ENCODE measurements at regions of chr5 and their contacts with region 1.

Region 1: GRCh38 chr5:13987843-13988464 is 43.5 kb upstream of the DNAH5 start:
- DNase-seq: peak; percentile 17 to 25
- H3K4me3 ChIP-seq: no peak overlapping the region
- H3K27ac ChIP-seq: no peak overlapping the region
- H3K4me1 ChIP-seq: no peaks in the 10 kb centered on the region
- H3K27me3 ChIP-seq: no peaks in the 10 kb centered on the region
- CTCF ChIP-seq: peak; percentile 68 to 76 (median 72)
- POLR2A ChIP-seq: no peak

Region 2: DNA sequence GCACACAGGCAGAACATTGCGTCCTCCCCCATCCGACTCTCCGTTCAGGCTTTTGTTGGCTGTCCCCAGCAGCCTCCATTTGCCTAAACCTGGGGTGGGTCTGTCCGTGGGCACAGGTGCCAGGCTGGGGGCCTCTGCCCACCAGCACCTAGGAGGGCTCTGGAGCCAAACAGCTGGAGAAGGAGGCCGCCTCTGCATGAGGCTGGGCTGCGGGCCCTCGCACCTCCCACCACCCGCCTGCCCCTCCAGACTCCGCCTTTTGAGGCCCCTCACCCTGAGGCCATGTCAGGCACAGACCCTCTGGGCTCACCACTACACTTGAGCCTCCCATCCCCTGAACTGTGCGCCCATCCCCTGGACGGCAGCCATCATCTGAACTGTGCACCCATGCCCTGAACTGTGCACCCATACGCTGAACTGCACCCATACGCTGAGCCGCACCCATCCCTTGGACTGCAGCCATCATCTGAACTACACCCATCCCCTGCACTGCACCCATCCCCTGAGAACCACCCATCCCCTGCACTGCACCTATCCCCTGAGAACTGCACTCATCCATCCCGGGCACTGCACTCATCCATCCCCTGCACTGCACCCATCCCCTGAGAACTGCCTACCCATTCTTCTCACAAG is 495.7 kb after region 1 on chr5:
- intact Hi-C with region 1: no loop called
- DNase-seq: no peak
- H3K4me3 ChIP-seq: no peak overlapping the region
- H3K27ac ChIP-seq: no peak overlapping the region
- H3K4me1 ChIP-seq: no peaks in the 10 kb centered on the region
- H3K27me3 ChIP-seq: no peaks in the 10 kb centered on the region
- CTCF ChIP-seq: no peak
- POLR2A ChIP-seq: no peak

Region 3: DNA sequence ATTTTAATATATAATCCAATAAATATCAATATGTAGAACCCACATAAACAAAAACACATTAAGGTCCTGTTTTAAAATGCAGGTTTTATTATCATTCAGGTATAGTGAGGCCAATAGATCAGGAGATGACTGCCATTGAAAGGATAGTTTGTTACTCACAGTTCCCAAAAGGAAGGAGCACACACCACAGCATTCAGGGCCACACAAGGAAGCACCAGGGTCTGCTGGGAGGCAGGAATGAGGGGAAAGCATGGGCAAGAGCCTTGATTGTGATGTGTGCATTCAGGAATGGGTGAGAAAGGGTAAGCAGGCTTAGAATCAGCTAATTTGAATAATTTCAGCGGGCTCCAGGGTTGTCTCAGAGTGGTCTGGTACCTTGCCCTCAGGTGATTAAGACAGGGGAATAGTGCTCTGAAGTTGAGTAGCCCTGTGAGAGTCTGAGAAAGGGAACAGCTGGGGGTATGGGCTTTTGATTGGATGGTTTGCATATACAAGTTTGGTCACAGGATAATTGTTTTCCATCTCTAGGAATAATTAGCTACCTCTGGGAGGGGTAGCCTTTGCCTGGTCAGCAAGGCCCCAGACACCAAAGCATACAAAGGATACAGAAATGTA is 656.8 kb after region 1 on chr5:
- intact Hi-C with region 1: loop called (anchors 10 kb)
- DNase-seq: no peak
- H3K4me3 ChIP-seq: no peak overlapping the region
- H3K27ac ChIP-seq: no peak overlapping the region
- H3K4me1 ChIP-seq: no peaks in the 10 kb centered on the region
- H3K27me3 ChIP-seq: no peaks in the 10 kb centered on the region
- CTCF ChIP-seq: no peak
- POLR2A ChIP-seq: no peak